ENCODE measurements at regions of chr19 and their contacts with region 1.

Region 1: DNA sequence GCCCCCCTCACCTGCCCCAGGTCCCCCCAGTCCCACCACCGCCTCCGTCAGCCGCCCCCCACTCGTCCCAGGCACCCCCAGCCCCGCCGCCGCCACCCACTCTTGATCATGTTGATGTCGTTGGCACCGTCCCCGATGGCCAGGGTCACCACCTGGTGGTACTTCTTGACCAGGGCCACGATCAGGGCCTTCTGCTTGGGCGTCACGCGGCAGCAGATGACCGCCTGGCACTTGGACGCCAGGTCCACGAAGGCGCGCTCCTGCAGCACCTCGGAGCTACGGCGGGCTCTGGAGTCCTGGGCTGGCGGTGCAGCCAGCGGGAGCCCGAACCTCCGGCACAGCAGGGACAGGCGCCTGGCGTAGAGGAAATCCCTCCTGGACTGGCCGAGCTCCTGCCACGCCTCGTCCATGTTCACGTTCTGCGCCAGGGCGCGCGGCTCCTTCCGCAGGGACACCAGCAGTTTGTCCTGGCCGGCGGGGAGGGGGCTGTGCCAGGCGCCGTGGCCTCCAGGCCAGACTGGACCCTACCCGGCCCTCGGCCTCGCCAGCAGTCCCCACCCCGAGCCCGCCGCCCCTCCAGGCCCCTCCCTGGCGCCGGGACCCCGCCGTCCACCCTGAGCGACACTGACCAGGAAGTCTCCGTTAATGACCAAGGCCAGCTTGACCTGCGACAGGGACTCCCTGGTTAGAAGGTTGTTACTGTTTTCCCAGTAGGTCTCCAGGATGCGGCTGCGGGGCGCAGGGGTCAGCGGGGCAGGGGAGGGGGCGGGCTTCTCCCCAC is 22.6 kb downstream of the ATP8B3 start:
- DNase-seq: no peak
- ATAC-seq: peak; percentile 38

Region 2: DNA sequence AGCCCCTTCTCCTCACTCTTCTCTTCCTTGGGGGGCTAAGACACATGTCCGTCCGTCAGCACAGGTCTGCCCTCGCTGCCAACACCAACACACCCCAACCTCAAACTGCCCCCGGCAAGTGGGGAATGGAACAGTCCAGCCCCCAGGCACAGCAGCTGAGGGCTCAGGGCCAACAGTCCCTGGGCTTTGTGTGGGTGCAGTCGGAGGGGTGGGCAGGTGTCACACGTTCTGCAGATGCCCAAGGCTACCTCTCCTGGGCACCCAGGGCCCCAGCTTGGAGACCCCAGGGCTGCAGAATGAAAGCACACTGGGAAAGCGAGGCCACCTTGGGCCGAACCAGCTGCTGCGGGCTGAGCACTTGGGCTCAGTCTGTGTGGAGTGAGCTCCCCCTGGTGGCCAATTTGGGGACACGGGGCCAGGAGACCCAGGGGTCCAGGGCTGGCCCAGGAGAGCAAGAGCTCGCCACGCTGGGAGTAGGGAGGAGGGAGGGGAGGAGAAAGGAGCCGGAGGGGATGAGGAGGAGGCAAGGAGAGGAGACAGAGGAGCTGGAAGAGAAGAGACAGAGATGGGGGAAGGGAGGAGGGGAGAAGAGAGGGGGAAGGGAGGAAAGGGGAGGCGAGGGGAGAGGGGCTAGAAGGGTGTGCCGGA is 36.6 kb after region 1 on chr19:
- intact Hi-C with region 1: loop called (anchors 2 kb)
- DNase-seq: peak; percentile 85
- ATAC-seq: peak; percentile 64

Region 3: GRCh38 chr19:1905071-1905862 is 115.8 kb after region 1 on chr19 and contains the starts of genes ADAT3 and SCAMP4:
- intact Hi-C with region 1: no loop called
- DNase-seq: peak; percentile 100
- ATAC-seq: peak; percentile 98
- total RNA-seq, gene ADAT3: 1.6 TPM
- total RNA-seq, gene SCAMP4: 17.9 TPM